ENCODE measurements at regions of chr5 and their contacts with region 1.

Region 1: GRCh38 chr5:140073296-140073695 is 30.2 kb upstream of the NRG2 start:
- DNase-seq: peak in 4 of 5 donors; percentile 41 to 53 (median 50)
- H3K4me3 ChIP-seq: no peak overlapping the region
- H3K4me3 Mint-ChIP-seq: no peak overlapping the region
- H3K27ac ChIP-seq: no peak overlapping the region
- H3K27ac Mint-ChIP-seq: no peak overlapping the region
- H3K4me1 ChIP-seq: no peaks in the 10 kb centered on the region
- H3K4me1 Mint-ChIP-seq: no peaks in the 10 kb centered on the region
- H3K27me3 ChIP-seq: peaks cover 7% of the 10 kb centered on the region
- H3K27me3 Mint-ChIP-seq: peaks cover 8 to 13% of the 10 kb centered on the region in 2 donors

Region 2: GRCh38 chr5:139164020-139164419 is 909.3 kb before region 1 on chr5:
- CTCF ChIA-PET with region 1: no interaction called
- POLR2A ChIA-PET with region 1: no interaction called
- intact Hi-C with region 1: no loop called
- DNase-seq: no peak
- H3K4me3 ChIP-seq: no peak overlapping the region
- H3K4me3 Mint-ChIP-seq: no peak overlapping the region
- H3K27ac ChIP-seq: no peak overlapping the region
- H3K27ac Mint-ChIP-seq: no peak overlapping the region
- H3K4me1 ChIP-seq: no peaks in the 10 kb centered on the region
- H3K4me1 Mint-ChIP-seq: no peaks in the 10 kb centered on the region
- H3K27me3 ChIP-seq: no peaks in the 10 kb centered on the region
- H3K27me3 Mint-ChIP-seq: no peaks in the 10 kb centered on the region

Region 3: GRCh38 chr5:140157032-140157803 is 83.9 kb after region 1 on chr5:
- CTCF ChIA-PET with region 1: interaction called, 175 read pairs
- POLR2A ChIA-PET with region 1: interaction called, 4 read pairs
- intact Hi-C with region 1: loop called (anchors 1 kb)
- DNase-seq: peak; percentile 77 to 82 (median 82)
- H3K4me3 ChIP-seq: no peak overlapping the region
- H3K4me3 Mint-ChIP-seq: peak overlapping the region; percentile 52 to 79 (median 60)
- H3K27ac ChIP-seq: no peak overlapping the region
- H3K27ac Mint-ChIP-seq: peak overlapping the region in 6 of 7 donors; percentile 19 to 88 (median 30)
- H3K4me1 ChIP-seq: peaks cover 11% of the 10 kb centered on the region
- H3K4me1 Mint-ChIP-seq: peaks cover 2 to 15% (median 9%) of the 10 kb centered on the region in 4 donors
- H3K27me3 ChIP-seq: no peaks in the 10 kb centered on the region
- H3K27me3 Mint-ChIP-seq: no peaks in the 10 kb centered on the region

Region 4: DNA sequence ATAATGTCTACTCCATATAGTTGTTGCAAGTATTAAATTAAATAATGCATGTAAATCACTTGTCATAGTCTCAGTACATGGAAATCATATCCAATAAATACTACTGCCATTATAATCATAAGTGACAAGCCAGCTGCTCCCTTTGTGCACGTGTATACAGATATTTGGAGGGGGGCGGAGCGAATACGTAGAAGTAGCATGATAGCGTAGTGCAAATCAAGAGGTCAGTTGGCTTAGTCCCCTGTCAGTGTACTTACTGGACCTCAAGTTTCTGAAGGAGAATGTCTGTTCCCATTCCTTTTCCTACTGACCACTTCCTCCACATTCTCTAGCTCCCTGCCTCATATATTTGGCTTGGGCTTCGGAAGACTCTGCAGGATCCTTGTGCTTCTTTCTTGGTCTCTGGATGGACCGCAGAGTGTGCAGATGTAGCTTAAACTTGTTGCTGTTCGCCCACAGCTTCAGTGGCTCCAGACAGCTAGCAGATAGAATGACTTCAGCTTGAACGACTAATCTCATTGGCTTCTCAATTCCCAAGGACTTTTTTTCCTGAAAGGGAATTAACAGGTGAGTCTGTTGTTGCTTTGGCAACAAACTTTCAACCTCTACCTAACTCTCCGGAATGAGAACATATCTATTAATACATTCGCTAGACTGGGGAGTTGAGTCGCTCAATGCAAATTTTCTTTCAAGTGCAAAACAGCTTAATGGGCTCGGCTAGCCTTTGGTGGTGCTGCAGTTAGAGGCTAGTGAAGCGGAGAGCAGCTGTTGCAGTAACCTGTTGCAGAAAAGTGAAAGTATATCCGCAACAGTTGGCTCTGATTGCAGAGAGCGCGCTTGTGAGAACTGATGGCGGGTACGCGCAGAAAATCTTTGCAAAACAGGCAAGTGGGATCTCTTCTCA is 977.6 kb after region 1 on chr5 and contains the start of gene PCDHB1:
- CTCF ChIA-PET with region 1: no interaction called
- POLR2A ChIA-PET with region 1: no interaction called
- intact Hi-C with region 1: no loop called
- DNase-seq: no peak
- H3K4me3 ChIP-seq: no peak within 1 kb of the TSS
- H3K4me3 Mint-ChIP-seq: peak within 1 kb of the TSS; percentile 39 to 71 (median 68)
- H3K27ac ChIP-seq: no peak within 1 kb of the TSS
- H3K27ac Mint-ChIP-seq: no peak within 1 kb of the TSS
- H3K4me1 ChIP-seq: no peaks in the 10 kb centered on the region
- H3K4me1 Mint-ChIP-seq: peaks cover 0 to 11% (median 2%) of the 10 kb centered on the region in 4 donors
- H3K27me3 ChIP-seq: no peaks in the 10 kb centered on the region
- H3K27me3 Mint-ChIP-seq: peaks cover 31 to 41% of the 10 kb centered on the region in 2 donors
- total RNA-seq, gene PCDHB1: not detected

Measured in CD4-positive, alpha-beta memory T cell (primary cell).